ENCODE measurements at regions of chr19 and their contacts with region 1.

Region 1: DNA sequence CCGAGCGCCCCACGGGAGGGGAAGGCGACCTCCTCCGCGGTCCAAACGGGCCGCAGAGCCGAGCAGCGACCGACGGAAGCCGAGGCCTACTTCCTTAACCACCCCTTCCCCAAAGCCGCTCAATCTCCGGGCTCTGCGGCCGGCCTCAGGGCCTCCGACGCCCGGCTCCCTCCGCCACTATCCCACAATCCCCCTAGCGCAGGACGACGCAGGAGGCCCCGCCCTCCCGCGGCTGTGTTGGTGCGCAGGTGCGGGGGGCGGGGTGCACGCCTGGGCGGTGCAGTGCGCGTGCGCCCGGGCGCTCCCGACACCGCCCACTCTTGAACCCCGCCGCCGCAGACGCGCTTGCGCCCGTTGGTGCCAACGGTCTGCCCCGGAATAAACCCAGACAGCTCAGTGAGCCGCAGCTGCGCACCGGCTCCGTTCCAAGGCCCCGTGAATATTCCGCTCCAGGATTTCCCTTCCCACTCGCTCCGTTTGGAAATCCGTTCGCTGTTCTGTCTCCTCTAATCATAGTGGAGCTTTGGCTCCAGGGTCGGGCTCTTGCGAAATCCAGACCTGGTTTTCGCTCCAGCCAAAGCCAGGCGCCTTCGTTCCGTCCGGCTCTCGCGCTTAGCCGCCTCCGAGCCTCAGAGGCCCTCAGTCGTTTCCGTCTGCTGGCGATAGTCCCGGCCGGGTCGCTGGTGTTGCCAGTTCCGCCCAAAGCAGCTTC is at the start of gene PPP6R1:
- DNase-seq: peak; percentile 94 to 98 (median 96)
- H3K4me3 ChIP-seq: peak within 1 kb of the TSS; percentile 79 to 92
- H3K4me3 Mint-ChIP-seq: peak within 1 kb of the TSS; percentile 93 to 100 (median 98)
- H3K27ac ChIP-seq: peak within 1 kb of the TSS; percentile 92
- H3K27ac Mint-ChIP-seq: peak within 1 kb of the TSS; percentile 97 to 100 (median 99)
- H3K4me1 ChIP-seq: peaks cover 44% of the 10 kb centered on the region
- H3K4me1 Mint-ChIP-seq: peaks cover 23 to 50% (median 38%) of the 10 kb centered on the region in 4 donors
- H3K27me3 ChIP-seq: no peaks in the 10 kb centered on the region
- H3K27me3 Mint-ChIP-seq: peaks cover 0 to 2% of the 10 kb centered on the region in 2 donors
- total RNA-seq, gene PPP6R1: 161 to 162 TPM

Region 2: DNA sequence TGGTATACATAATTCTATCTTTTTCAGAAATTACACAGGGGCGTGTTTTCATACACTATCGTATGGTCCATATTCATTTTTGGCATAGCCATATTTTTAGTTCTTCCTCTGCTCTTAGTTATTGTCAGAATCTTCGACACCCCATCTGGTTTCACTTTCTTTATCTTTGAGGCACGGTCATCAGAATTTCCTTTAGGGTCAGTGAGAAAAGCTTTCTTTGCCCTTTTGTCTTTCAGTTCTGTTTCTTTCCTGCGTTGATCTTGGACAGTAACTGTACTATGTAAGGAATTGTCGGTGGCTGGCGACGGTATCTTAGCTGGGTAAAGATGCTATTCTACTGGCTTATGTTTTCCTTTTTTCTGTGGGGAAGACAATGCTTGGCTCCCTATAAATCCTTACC is 466.2 kb before region 1 on chr19:
- CTCF ChIA-PET with region 1: no interaction called
- POLR2A ChIA-PET with region 1: no interaction called
- intact Hi-C with region 1: no loop called
- DNase-seq: no peak
- H3K4me3 ChIP-seq: peak overlapping the region in 1 of 2 donors; percentile 11
- H3K4me3 Mint-ChIP-seq: peak overlapping the region; percentile 74 to 91 (median 83)
- H3K27ac ChIP-seq: no peak overlapping the region
- H3K27ac Mint-ChIP-seq: peak overlapping the region in 6 of 7 donors; percentile 19 to 90 (median 73)
- H3K4me1 ChIP-seq: peaks cover 8% of the 10 kb centered on the region
- H3K4me1 Mint-ChIP-seq: peaks cover 13 to 20% (median 18%) of the 10 kb centered on the region in 4 donors
- H3K27me3 ChIP-seq: no peaks in the 10 kb centered on the region
- H3K27me3 Mint-ChIP-seq: peaks cover 8 to 17% of the 10 kb centered on the region in 2 donors

Region 3: GRCh38 chr19:55178781-55179599 is 80.0 kb before region 1 on chr19:
- CTCF ChIA-PET with region 1: no interaction called
- POLR2A ChIA-PET with region 1: interaction called, 6 read pairs
- intact Hi-C with region 1: loop called (anchors 2 kb)
- DNase-seq: peak; percentile 94 to 98 (median 95)
- H3K4me3 ChIP-seq: peak overlapping the region; percentile 42 to 63
- H3K4me3 Mint-ChIP-seq: peak overlapping the region; percentile 66 to 88 (median 83)
- H3K27ac ChIP-seq: peak overlapping the region; percentile 46
- H3K27ac Mint-ChIP-seq: peak overlapping the region; percentile 87 to 99 (median 96)
- H3K4me1 ChIP-seq: peaks cover 30% of the 10 kb centered on the region
- H3K4me1 Mint-ChIP-seq: peaks cover 12 to 37% (median 23%) of the 10 kb centered on the region in 4 donors
- H3K27me3 ChIP-seq: peaks cover 50% of the 10 kb centered on the region
- H3K27me3 Mint-ChIP-seq: peaks cover 45 to 61% of the 10 kb centered on the region in 2 donors

Region 4: GRCh38 chr19:55270172-55270942 is 11.4 kb after region 1 on chr19:
- CTCF ChIA-PET with region 1: interaction called, 5 read pairs
- POLR2A ChIA-PET with region 1: interaction called, 10 read pairs
- intact Hi-C with region 1: no loop called
- DNase-seq: no peak
- H3K4me3 ChIP-seq: no peak overlapping the region
- H3K4me3 Mint-ChIP-seq: no peak overlapping the region
- H3K27ac ChIP-seq: no peak overlapping the region
- H3K27ac Mint-ChIP-seq: peak overlapping the region in 1 of 7 donors; percentile 5
- H3K4me1 ChIP-seq: no peaks in the 10 kb centered on the region
- H3K4me1 Mint-ChIP-seq: peaks cover 0 to 10% (median 5%) of the 10 kb centered on the region in 4 donors
- H3K27me3 ChIP-seq: no peaks in the 10 kb centered on the region
- H3K27me3 Mint-ChIP-seq: no peaks in the 10 kb centered on the region

Region 5: GRCh38 chr19:55301459-55302317 is 42.7 kb after region 1 on chr19:
- CTCF ChIA-PET with region 1: interaction called, 17 read pairs
- POLR2A ChIA-PET with region 1: interaction called, 21 read pairs
- intact Hi-C with region 1: no loop called
- DNase-seq: peak; percentile 87 to 90 (median 88)
- H3K4me3 ChIP-seq: peak overlapping the region; percentile 34 to 49
- H3K4me3 Mint-ChIP-seq: peak overlapping the region; percentile 75 to 86 (median 80)
- H3K27ac ChIP-seq: peak overlapping the region; percentile 22
- H3K27ac Mint-ChIP-seq: peak overlapping the region; percentile 57 to 94 (median 82)
- H3K4me1 ChIP-seq: peaks cover 11% of the 10 kb centered on the region
- H3K4me1 Mint-ChIP-seq: peaks cover 6 to 21% (median 10%) of the 10 kb centered on the region in 4 donors
- H3K27me3 ChIP-seq: no peaks in the 10 kb centered on the region
- H3K27me3 Mint-ChIP-seq: no peaks in the 10 kb centered on the region

Region 6: DNA sequence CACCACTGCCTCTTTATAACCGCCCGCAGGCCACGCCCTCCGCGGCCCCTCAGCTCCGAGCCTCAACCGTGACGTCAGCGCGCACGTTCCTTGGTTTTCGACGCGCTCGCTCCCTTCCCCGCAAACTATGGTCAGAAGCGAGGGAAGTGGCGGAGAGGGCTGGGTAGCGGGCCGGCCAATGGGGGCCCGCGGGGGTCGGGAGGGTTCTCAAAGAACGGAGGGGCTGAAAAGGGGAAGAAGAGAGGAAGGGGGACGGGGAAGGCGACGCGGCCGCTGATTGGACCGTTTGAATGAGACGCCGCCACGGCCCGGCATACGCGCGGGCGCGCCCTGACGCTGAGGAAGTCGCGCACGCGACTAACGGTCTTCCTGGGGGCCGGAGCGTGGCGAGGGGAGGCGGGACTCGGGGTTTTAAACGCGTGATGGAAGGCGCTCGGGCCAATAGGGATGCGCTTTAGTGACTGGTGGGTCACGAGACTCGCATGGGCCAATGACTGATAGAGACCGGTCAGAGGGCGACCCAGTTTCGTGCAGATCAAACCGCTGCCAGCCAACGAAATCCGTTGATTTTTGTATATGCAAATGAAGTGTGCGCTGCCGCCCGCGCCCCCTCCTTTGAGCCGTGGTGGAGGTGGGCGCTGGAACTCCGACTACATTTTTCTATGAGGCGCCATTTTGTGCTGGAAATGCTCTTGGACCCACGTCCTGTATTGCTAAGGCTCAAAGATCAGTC is 149.0 kb after region 1 on chr19:
- CTCF ChIA-PET with region 1: interaction called, 3 read pairs
- POLR2A ChIA-PET with region 1: interaction called, 60 read pairs
- intact Hi-C with region 1: loop called (anchors 1 kb)
- DNase-seq: peak; percentile 96 to 99 (median 98)
- H3K4me3 ChIP-seq: peak overlapping the region; percentile 64 to 69
- H3K4me3 Mint-ChIP-seq: peak overlapping the region; percentile 89 to 96 (median 93)
- H3K27ac ChIP-seq: peak overlapping the region; percentile 99
- H3K27ac Mint-ChIP-seq: peak overlapping the region; percentile 98 to 100 (median 99)
- H3K4me1 ChIP-seq: peaks cover 24% of the 10 kb centered on the region
- H3K4me1 Mint-ChIP-seq: peaks cover 22 to 32% (median 28%) of the 10 kb centered on the region in 4 donors
- H3K27me3 ChIP-seq: no peaks in the 10 kb centered on the region
- H3K27me3 Mint-ChIP-seq: no peaks in the 10 kb centered on the region

Region 7: DNA sequence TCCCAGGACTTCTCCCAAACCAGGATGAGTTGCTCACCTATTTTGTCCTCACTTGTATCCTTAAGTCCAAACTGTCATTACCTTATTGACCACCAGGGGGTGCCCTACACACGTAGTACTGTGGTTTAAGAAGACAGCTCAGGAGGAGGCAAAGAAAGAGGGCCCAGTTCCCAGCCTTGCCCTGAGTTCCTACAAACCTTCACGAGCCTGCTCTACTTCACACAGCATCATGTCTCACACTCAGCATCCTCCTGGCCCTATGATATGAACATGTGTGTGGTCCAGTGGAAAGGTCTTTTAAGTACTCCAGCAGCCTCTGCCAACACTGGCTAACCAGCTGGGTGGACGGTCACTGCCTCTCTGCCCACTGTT is 373.5 kb after region 1 on chr19:
- CTCF ChIA-PET with region 1: interaction called, 3 read pairs
- POLR2A ChIA-PET with region 1: interaction called, 4 read pairs
- intact Hi-C with region 1: loop called (anchors 10 kb)
- DNase-seq: peak; percentile 85 to 95 (median 88)
- H3K4me3 ChIP-seq: no peak overlapping the region
- H3K4me3 Mint-ChIP-seq: peak overlapping the region; percentile 4 to 68 (median 52)
- H3K27ac ChIP-seq: no peak overlapping the region
- H3K27ac Mint-ChIP-seq: peak overlapping the region; percentile 69 to 98 (median 91)
- H3K4me1 ChIP-seq: peaks cover 41% of the 10 kb centered on the region
- H3K4me1 Mint-ChIP-seq: peaks cover 30 to 55% (median 43%) of the 10 kb centered on the region in 4 donors
- H3K27me3 ChIP-seq: no peaks in the 10 kb centered on the region
- H3K27me3 Mint-ChIP-seq: no peaks in the 10 kb centered on the region

Measured in CD4-positive, alpha-beta memory T cell (primary cell).